Vagina (tissue), 2 donors: ENCODE measurements at regions of chr16 and their contacts with region 1.

Region 1: DNA sequence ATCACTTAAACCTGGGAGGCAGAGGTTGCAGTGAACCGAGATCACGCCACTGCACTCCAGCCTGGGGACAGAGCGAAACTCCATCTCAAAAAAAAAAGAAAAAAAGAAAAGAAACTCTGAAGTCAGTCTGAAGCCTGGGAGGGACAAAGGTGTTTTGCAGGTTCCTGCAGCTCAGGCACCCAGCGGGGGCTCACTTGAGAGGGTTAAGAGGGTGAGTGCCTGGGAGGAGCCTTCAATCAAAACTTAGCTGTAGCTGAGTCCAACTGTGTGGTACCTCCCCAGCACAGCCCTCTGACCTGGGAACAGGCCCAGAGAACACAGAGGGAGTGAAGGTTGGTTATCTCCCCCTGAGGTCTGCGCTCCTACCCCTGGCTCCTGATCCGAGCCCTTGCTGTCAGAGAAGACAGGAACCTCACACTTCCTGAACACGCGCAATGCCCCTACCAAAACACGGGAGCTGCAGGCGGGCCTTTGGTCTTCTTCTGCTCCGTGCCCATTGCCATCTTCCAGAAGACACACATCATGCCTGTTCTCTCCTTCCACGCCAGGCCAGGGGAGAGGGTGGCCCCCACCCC is 20.4 kb upstream of the ZC3H18 start:
- DNase-seq: no peak
- H3K4me3 ChIP-seq: no peak overlapping the region
- H3K27ac ChIP-seq: no peak overlapping the region
- H3K4me1 ChIP-seq: no peaks in the 10 kb centered on the region
- H3K27me3 ChIP-seq: peaks cover 6% of the 10 kb centered on the region
- CTCF ChIP-seq: no peak
- POLR2A ChIP-seq: no peak

Region 2: DNA sequence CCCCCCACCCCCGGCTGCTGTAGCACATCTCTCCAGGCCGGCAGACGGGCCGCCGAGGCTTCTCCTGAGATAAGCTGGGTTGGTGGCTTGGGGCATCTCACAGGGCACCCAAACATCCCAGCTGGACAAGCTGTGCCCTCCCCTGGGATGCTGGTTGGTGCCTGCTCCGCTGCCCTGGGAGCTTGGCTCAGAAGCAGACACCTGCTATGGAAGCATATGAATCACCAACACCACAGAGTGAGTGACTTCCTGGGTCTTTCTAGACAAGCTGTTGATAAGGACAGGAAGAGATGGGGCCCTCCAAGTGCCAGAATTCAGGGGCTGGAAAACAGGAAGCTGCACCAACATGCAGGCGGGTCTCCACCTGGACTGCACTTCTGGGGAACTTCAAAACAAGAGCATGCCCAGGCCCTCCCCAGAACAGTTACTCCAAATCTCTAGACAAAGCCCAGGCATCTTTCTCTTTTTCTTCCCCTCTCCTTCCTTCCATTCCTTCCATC is 1246.3 kb before region 1 on chr16:
- intact Hi-C with region 1: loop called (anchors 5 kb)
- DNase-seq: no peak
- H3K4me3 ChIP-seq: no peak overlapping the region
- H3K27ac ChIP-seq: no peak overlapping the region
- H3K4me1 ChIP-seq: no peaks in the 10 kb centered on the region
- H3K27me3 ChIP-seq: no peaks in the 10 kb centered on the region
- CTCF ChIP-seq: no peak
- POLR2A ChIP-seq: no peak